ENCODE measurements at regions of chr22 and their contacts with region 1.

Region 1: DNA sequence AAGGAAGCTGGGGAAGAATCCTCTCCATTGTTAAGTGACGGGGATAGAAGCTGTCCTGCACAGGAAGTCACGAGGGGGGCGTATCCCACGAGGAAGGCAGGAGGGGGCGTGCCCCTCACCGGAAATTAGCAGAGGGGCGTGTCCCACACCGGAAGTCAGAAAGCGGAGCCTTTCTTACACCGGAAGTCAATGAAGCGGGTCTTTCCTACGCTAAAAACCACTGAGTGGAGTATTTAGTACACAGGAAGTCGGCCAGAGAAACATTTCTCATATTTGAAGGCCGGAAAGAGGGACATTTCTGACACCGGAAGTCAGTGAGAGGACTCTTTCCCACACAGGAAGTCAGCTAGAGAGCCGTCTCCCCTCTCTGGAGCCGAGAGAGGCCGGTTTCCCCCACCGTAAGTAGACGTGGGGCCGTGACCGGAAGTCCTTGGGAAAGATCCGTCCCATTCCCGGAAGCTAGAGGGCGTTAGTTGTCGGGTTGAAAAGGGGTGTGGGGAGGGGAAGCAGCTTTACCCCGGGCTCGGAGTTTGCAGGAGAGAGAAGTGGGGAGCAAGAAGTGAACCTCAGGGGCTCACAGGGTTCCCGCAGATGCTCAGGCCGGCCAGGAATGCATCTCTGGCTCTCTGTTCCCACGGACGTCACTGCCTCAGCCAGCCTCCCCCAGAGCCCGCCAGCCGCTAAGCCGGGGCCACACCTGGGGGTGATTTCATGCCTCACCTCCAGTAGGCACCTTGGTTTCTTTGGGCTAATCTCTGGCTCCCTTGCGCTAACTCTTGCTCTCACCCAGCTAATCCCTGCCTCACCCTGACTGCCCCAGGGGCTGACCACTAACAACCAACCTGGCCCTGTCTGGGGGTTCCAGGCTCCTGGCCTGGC is 15.4 kb downstream of the MIAT start:
- DNase-seq: peak; percentile 93

Region 2: GRCh38 chr22:26660961-26661578 is 11.8 kb before region 1 on chr22:
- CTCF ChIA-PET with region 1: interaction called, 5 read pairs
- POLR2A ChIA-PET with region 1: interaction called, 12 read pairs
- DNase-seq: no peak

Region 3: GRCh38 chr22:26756675-26757293 is 84.0 kb after region 1 on chr22:
- CTCF ChIA-PET with region 1: no interaction called
- POLR2A ChIA-PET with region 1: no interaction called
- DNase-seq: peak; percentile 82

Region 4: DNA sequence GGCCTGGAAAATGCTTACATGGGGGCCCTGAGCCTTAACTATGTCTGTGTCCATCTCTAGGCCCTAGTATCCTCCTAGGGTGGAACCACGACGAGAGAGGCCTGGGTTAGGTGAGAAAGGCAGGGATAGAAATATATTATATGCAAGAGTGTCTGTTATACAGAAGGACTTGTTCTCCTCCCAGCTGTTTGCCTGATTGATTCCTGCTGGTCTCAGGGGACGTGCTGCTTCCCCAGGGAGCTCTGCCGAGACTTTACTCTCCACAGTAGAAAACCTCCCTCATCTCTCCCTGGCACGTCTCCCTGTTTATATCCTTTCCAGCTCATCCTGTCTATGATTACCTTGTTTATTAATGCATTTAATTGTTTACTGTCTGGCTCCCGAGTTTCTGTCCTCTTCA is 117.1 kb after region 1 on chr22:
- CTCF ChIA-PET with region 1: no interaction called
- POLR2A ChIA-PET with region 1: no interaction called
- DNase-seq: no peak

Measured in HEK293T (cell line).